ENCODE measurements at regions of chr5 and their contacts with region 1.

Region 1: DNA sequence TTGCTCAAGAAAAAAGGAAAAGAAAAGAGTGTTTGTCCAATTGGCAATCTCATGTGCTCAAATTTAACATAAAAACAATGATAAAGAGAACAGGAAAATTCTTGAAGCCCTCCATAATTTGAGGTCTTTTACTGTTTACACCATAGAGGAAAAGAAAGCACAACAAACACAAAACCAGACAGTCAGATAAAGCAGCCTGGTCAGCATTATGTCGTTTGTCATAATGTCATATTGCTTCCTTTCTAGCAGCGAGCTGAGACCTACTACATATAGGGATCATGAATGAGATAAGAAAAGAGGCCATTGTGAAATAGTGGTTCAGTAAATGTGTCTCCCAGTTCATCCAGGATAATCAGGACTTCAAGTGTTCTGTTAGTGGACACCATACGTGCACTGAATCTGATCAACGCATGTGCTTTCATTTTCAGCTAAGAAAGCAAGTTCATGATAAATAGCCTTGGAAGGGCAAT is 64.7 kb upstream of the SELENOP start:
- DNase-seq: no peak
- ATAC-seq: no peak
- H3K4me3 ChIP-seq: peak overlapping the region in 2 of 3 experiments; percentile 54 to 60; a peak in 3 of 6 replicates
- H3K27ac ChIP-seq: peak overlapping the region; percentile 99
- H3K4me1 ChIP-seq: peaks cover 97% of the 10 kb centered on the region
- H3K27me3 ChIP-seq: no peaks in the 10 kb centered on the region
- CTCF ChIP-seq: no peak
- EP300 ChIP-seq: no peak
- POLR2A ChIP-seq: no peak
- RAD21 ChIP-seq: no peak

Region 2: GRCh38 chr5:42798284-42799240 is 77.8 kb before region 1 on chr5:
- CTCF ChIA-PET with region 1: no interaction called
- POLR2A ChIA-PET with region 1: interaction called, 18 read pairs
- in situ Hi-C with region 1: loop called (anchors 10 kb)
- intact Hi-C with region 1: no loop called
- DNase-seq: peak; percentile 28
- ATAC-seq: peak; percentile 70
- H3K4me3 ChIP-seq: no peak overlapping the region
- H3K27ac ChIP-seq: no peak overlapping the region
- H3K4me1 ChIP-seq: no peaks in the 10 kb centered on the region
- H3K27me3 ChIP-seq: no peaks in the 10 kb centered on the region
- CTCF ChIP-seq: no peak
- EP300 ChIP-seq: no peak
- POLR2A ChIP-seq: peak; percentile 31 to 44; a peak in 2 of 4 replicates
- RAD21 ChIP-seq: no peak

Region 3: GRCh38 chr5:42858031-42858643 is 18.3 kb before region 1 on chr5:
- CTCF ChIA-PET with region 1: no interaction called
- POLR2A ChIA-PET with region 1: interaction called, 97 read pairs
- in situ Hi-C with region 1: no loop called
- intact Hi-C with region 1: no loop called
- DNase-seq: no peak
- ATAC-seq: peak; percentile 60
- H3K4me3 ChIP-seq: peak overlapping the region in 2 of 3 experiments; percentile 22 to 51; a peak in 3 of 6 replicates
- H3K27ac ChIP-seq: peak overlapping the region; percentile 69
- H3K4me1 ChIP-seq: peaks cover 89% of the 10 kb centered on the region
- H3K27me3 ChIP-seq: no peaks in the 10 kb centered on the region
- CTCF ChIP-seq: no peak
- EP300 ChIP-seq: no peak
- POLR2A ChIP-seq: no peak
- RAD21 ChIP-seq: no peak